ENCODE measurements at regions of chr18 and their contacts with region 1.

Region 1: DNA sequence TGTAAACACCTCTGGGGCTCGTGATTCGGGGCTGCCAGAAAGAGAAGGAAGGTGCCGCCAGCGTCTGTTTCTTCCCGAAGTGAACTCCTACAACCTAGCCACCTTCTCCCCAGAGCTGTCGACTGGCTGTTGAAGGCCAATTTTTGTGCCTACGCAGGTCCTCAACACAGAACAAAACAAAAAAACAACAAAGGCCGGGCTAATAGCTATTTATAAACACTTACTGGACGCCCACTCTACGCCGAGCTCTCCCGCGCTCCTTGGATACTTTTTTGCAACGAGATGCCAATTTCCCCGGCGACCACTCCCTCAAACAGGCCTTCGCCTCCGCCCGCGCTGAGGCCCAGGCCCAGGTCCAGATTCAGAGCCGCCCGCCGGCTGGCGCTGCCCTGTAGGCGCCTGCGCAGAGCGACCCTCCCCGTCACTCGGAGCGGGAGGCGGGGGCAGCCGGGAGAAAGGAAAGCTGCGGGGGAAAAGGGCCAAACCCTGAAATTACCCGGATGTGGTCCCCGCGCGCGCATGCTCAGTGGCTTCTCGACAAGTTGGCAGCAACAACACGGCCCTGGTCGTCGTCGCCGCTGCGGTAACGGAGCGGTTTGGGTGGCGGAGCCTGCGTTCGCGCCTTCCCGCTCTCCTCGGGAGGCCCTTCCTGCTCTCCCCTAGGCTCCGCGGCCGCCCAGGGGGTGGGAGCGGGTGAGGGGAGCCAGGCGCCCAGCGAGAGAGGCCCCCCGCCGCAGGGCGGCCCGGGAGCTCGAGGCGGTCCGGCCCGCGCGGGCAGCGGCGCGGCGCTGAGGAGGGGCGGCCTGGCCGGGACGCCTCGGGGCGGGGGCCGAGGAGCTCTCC is at the start of gene SMAD4:
- DNase-seq: peak; percentile 96 to 98 (median 97)
- H3K4me3 ChIP-seq: peak within 1 kb of the TSS; percentile 47 to 53
- H3K4me3 Mint-ChIP-seq: peak within 1 kb of the TSS; percentile 95 to 100 (median 98)
- H3K27ac ChIP-seq: peak within 1 kb of the TSS; percentile 83
- H3K27ac Mint-ChIP-seq: peak within 1 kb of the TSS; percentile 98 to 99 (median 99)
- H3K4me1 ChIP-seq: peaks cover 80% of the 10 kb centered on the region
- H3K4me1 Mint-ChIP-seq: peaks cover 39 to 63% (median 48%) of the 10 kb centered on the region in 4 donors
- H3K27me3 ChIP-seq: no peaks in the 10 kb centered on the region
- H3K27me3 Mint-ChIP-seq: no peaks in the 10 kb centered on the region
- total RNA-seq, gene SMAD4: 143 to 155 TPM

Region 2: GRCh38 chr18:50967714-50968661 is 61.9 kb before region 1 on chr18 and contains the start of gene ELAC1:
- CTCF ChIA-PET with region 1: interaction called, 10 read pairs
- POLR2A ChIA-PET with region 1: interaction called, 95 read pairs
- intact Hi-C with region 1: loop called (anchors 1 kb)
- DNase-seq: peak; percentile 67 to 76 (median 68)
- H3K4me3 ChIP-seq: peak within 1 kb of the TSS; percentile 77 to 88
- H3K4me3 Mint-ChIP-seq: peak within 1 kb of the TSS; percentile 95 to 99 (median 96)
- H3K27ac ChIP-seq: peak within 1 kb of the TSS; percentile 81
- H3K27ac Mint-ChIP-seq: peak within 1 kb of the TSS; percentile 90 to 98 (median 96)
- H3K4me1 ChIP-seq: peaks cover 25% of the 10 kb centered on the region
- H3K4me1 Mint-ChIP-seq: peaks cover 18 to 29% (median 21%) of the 10 kb centered on the region in 4 donors
- H3K27me3 ChIP-seq: no peaks in the 10 kb centered on the region
- H3K27me3 Mint-ChIP-seq: peaks cover 0 to 3% of the 10 kb centered on the region in 2 donors
- total RNA-seq, gene ELAC1: 11.6 to 11.7 TPM

Region 3: DNA sequence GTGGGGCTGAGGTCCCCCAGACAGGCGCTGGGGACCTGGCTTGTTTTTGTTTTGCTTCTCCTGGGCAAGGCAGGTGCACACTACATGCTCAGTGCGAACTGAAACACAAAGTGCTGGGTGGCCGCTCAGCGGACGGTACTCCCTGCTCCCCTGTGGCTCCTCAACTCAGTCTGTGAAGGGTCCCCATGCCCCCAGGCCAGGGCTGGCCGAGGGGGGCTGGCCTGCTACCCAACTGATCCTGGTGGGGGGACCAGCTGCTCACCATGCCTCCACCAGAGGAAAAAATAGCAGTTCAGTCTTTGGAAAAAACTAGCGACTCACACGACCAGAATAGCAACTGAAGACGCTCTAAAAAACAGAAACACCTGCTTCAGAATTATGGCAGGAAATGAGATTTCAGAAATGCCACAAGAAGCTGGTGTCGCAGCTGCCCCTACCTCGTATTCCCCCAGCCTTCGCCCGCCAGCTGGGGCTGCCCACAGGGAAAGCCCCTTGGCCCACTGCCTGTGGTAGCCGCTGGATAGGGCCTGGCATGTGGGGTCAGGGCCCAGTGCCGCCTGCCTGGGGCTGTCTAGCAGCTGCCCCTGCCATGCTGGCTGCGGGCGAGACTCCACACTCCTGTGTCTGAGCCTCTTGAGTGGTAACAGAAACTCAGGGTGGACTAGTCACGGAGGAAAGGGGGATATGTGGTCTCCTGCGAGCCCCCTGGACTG is 123.9 kb after region 1 on chr18:
- CTCF ChIA-PET with region 1: interaction called, 3 read pairs
- POLR2A ChIA-PET with region 1: interaction called, 4 read pairs
- intact Hi-C with region 1: loop called (anchors 2 kb)
- DNase-seq: peak; percentile 26 to 69 (median 46)
- H3K4me3 ChIP-seq: peak overlapping the region; percentile 47 to 53
- H3K4me3 Mint-ChIP-seq: peak overlapping the region; percentile 81 to 90 (median 85)
- H3K27ac ChIP-seq: peak overlapping the region; percentile 50
- H3K27ac Mint-ChIP-seq: peak overlapping the region; percentile 78 to 92 (median 87)
- H3K4me1 ChIP-seq: peaks cover 36% of the 10 kb centered on the region
- H3K4me1 Mint-ChIP-seq: peaks cover 20 to 41% (median 29%) of the 10 kb centered on the region in 4 donors
- H3K27me3 ChIP-seq: no peaks in the 10 kb centered on the region
- H3K27me3 Mint-ChIP-seq: no peaks in the 10 kb centered on the region

Measured in CD4-positive, alpha-beta memory T cell (primary cell).